Activated CD4-positive, alpha-beta memory T cell treated with anti-CD3 and anti-CD28 coated beads, Interleukin-2, amount 10 ng/mL, durations not matched to agents 7 days and 5 days (primary cell): ENCODE measurements at regions of chr2 and their contacts with region 1.

Region 1: DNA sequence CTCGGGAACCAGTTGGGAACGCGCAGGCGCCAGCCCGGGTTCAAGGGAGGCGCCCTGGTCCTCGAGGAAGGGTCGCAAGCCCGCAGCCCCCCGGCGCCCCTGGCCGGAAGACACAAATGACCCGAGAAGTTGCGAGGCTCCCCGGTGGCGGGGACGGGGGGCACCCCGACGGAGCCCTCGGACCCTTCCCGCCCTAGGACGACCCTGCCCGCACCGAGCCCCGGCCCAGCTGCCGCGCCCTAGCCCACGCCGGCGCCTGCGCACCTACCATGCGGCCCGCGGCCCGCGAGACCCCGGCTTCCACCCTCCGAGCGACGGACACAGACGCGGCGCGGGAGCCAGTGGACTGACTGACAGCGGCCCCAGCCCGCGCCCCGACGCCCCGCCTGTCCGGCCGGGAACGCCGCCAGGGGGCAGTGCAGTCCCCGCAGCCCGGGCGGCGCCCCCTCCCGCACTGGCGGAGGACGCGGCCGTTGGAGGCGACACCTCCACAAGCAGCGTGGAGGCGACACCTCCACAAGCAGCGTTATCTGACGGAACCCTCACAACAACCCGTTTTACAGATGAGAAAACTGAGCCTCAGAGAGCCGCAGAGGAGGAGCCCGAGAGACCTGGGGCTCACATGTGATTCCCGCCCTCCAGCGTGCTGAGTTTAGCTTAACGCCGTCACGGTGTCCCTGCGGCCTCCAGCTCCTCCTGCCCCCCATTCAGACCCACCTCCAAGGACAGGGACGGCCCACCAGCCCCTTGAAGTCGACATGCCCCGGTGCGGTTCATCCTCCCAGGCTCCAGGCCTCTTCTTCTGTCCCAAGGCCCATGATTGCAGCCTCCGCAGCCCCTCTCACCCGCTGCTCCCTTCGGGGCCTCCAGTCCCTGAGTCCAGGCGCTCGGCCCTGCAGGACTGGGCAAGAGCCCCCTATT is at the start of gene NMUR1:
- DNase-seq: peak; percentile 83
- H3K4me3 Mint-ChIP-seq: peak within 1 kb of the TSS; percentile 37
- H3K27ac Mint-ChIP-seq: no peak within 1 kb of the TSS
- H3K4me1 Mint-ChIP-seq: peaks cover 40% of the 10 kb centered on the region
- H3K27me3 Mint-ChIP-seq: peaks cover 46% of the 10 kb centered on the region
- total RNA-seq, gene NMUR1: 3.4 to 3.9 TPM

Region 2: DNA sequence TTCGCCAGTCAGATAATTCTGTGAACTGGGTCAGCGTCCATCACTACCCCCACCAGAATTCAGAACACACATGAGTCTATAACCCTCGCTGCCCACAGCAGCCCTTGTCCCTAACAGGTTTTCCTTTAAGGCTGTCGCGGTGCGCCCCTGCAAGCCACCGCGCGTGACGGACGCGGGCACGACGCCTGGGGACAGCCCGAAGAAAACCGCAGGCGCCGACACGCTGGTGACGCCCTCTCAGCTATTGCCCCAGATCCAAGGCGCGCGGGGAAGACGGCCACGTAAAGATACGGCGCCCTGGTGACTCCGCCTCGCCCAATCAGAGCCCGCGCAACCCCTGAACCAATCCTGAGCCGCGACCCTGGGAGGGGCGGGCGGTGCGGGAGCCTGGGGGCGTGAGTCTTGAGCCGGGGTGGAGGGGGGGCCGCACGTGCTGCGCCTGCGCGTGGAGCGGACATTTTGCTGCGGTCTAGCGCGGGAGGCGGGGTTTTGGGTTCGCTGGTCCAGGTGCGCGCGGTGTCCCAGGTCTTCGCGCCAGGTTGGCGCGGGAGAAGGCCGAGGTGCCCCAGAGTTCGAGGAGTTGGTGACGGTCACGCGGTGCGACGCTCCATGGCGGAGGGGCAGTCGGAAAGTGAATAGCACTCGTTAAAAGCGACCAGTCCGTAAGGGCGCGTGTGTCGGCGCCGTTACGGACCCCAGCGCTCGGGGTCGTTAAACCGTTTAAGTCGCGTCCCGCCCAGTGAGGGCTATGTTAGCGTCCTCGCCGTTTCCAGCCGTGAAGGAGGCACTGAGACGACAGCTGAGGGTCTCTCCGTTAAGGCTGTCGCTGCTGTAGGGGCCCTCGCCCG is 16.0 kb before region 1 on chr2:
- CTCF ChIA-PET with region 1: interaction called, 10 read pairs
- POLR2A ChIA-PET with region 1: interaction called, 4 read pairs
- DNase-seq: peak; percentile 99
- H3K4me3 Mint-ChIP-seq: peak overlapping the region; percentile 88
- H3K27ac Mint-ChIP-seq: peak overlapping the region; percentile 86
- H3K4me1 Mint-ChIP-seq: peaks cover 29% of the 10 kb centered on the region
- H3K27me3 Mint-ChIP-seq: peaks cover 14% of the 10 kb centered on the region

Region 3: GRCh38 chr2:231545105-231545902 is 15.0 kb after region 1 on chr2:
- CTCF ChIA-PET with region 1: interaction called, 9 read pairs
- POLR2A ChIA-PET with region 1: interaction called, 18 read pairs
- DNase-seq: peak; percentile 90
- H3K4me3 Mint-ChIP-seq: peak overlapping the region; percentile 56
- H3K27ac Mint-ChIP-seq: peak overlapping the region; percentile 99
- H3K4me1 Mint-ChIP-seq: peaks cover 69% of the 10 kb centered on the region
- H3K27me3 Mint-ChIP-seq: peaks cover 10% of the 10 kb centered on the region

Region 4: GRCh38 chr2:231563378-231563961 is 33.1 kb after region 1 on chr2:
- CTCF ChIA-PET with region 1: interaction called, 18 read pairs
- POLR2A ChIA-PET with region 1: interaction called, 5 read pairs
- DNase-seq: peak; percentile 45
- H3K4me3 Mint-ChIP-seq: no peak overlapping the region
- H3K27ac Mint-ChIP-seq: no peak overlapping the region
- H3K4me1 Mint-ChIP-seq: peaks cover 6% of the 10 kb centered on the region
- H3K27me3 Mint-ChIP-seq: peaks cover 5% of the 10 kb centered on the region